ENCODE measurements at regions of chr19 and their contacts with region 1.

Region 1: GRCh38 chr19:46661020-46661731 is at the start of gene DACT3:
- DNase-seq: peak; percentile 100
- H3K4me3 ChIP-seq: peak within 1 kb of the TSS in 2 of 4 donors; percentile 33 to 61
- H3K27ac ChIP-seq: peak within 1 kb of the TSS in 4 of 5 donors; percentile 59 to 83 (median 76)
- H3K4me1 ChIP-seq: peaks cover 12 to 26% of the 10 kb centered on the region in 2 donors
- H3K27me3 ChIP-seq: no peaks in the 10 kb centered on the region
- CTCF ChIP-seq: peak in 1 of 6 experiments; percentile 11
- POLR2A ChIP-seq: no peak
- total RNA-seq, gene DACT3: 1.7 to 9.8 (median 4.0) TPM

Region 2: DNA sequence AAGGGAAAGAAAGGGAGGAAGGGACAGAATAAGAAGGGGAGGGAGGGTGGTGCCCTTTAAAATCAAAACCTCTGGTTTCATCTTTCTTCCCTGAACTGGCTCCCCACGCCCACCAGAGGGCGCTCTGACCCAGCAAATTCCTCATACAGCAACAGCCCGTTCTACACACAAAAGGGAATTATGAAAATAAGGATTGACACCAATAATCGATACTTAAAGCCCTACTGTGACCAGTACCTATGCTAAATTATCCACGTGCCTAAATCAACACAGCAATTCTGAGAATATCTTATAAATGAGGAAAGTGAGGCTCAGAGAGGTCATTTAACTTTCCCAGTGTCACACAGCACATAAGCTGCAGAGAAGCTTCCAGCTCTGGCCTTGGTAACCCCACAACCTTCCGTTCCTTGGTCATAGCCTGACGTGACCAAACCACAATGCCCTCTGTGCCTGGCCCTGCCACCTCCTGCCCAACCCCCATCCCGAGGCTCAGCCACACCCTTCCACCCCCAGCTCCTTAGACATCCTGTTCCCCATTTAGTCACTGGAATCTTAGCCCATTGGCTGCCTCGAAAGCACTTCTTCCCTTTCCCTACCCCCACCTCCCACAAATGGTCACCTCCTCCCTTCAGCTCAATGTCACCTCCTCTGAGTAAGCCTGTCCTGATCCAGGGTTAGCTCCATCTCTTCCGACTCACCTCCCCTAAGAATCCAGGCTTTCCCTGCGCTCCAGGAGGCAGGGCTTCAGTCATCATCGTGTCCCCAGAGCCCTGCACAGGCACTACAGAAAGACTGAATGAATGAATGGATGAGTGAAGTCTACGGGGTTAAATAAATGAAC is 131.3 kb before region 1 on chr19:
- intact Hi-C with region 1: loop called in 1 of 2 experiments (anchors 10 kb)
- DNase-seq: peak; percentile 63 to 85 (median 72)
- H3K4me3 ChIP-seq: no peak overlapping the region
- H3K27ac ChIP-seq: peak overlapping the region in 1 of 5 donors; percentile 44
- H3K4me1 ChIP-seq: peaks cover 0 to 10% of the 10 kb centered on the region in 2 donors
- H3K27me3 ChIP-seq: no peaks in the 10 kb centered on the region
- CTCF ChIP-seq: peak; percentile 79 to 98 (median 92)
- POLR2A ChIP-seq: no peak

Region 3: DNA sequence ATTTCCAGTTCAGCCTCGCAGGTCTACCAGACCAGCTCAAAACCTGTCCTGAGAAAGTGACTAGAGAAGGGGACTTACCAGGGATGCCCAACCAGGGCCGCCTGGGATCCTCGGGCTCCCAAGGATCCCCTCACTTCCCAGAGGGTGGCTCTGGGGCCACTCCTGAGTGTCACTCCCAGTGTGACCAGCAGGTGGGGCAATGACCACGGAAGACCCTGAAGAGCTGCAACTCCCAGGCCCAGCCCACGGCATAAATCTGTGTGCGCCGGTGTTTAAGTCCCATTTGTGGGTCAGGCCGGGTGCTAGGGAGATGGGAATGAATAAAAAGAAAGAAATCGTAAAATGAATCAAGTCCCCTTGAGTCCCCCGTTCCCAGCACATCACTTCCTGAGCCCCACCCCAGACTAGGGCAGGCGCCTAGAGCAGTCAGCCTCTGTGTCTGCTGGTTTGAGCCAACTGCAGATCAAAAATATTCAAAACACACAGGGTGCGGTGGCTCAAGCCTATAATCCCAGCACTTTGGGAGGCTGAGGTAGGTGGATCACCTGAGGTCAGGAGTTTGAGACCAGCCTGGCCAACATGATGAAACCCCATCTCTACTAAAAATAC is 47.0 kb before region 1 on chr19:
- intact Hi-C with region 1: loop called (anchors 5 kb)
- DNase-seq: peak; percentile 77 to 93 (median 85)
- H3K4me3 ChIP-seq: no peak overlapping the region
- H3K27ac ChIP-seq: no peak overlapping the region
- H3K4me1 ChIP-seq: peaks cover 0 to 17% of the 10 kb centered on the region in 2 donors
- H3K27me3 ChIP-seq: no peaks in the 10 kb centered on the region
- CTCF ChIP-seq: peak; percentile 76 to 91 (median 86)
- POLR2A ChIP-seq: no peak